Motor neuron (in vitro differentiated cells): ENCODE measurements at regions of chr10 and their contacts with region 1.

Region 1: DNA sequence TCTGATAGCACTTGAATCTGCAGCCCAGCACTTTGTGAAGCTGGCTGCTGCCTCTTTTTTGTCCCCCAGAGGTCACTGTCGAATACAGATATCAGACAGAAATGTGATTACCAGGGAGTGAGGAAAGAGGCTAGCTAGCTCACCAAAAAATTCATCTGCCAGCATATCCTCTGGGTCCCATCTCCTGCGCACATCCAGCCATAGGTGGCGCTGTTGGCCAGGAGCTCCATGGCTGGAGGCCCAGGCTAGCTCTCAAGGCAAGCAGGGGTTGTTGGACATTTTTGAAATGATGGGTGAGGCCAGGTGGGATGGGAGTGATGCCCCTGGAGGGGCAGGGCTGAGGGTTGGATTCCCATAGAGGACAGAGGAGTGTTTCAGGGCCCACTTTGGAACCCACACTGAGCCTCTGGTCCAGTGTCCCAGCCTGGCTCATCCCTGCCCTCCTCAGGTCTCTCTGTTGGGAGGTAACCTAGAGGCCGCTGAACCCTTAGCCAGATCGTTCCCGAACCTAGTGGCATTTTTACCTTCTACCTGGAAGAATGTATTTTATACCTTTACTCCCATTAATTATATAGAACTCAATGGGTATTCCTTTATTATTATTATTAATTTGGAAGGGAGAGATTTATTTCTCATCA is 14.8 kb downstream of the DPCD start:
- ATAC-seq: peak; percentile 99 to 100 (median 100)
- H3K4me3 ChIP-seq: no peak overlapping the region
- H3K27ac ChIP-seq: no peak overlapping the region
- H3K4me1 ChIP-seq: no peaks in the 10 kb centered on the region

Region 2: DNA sequence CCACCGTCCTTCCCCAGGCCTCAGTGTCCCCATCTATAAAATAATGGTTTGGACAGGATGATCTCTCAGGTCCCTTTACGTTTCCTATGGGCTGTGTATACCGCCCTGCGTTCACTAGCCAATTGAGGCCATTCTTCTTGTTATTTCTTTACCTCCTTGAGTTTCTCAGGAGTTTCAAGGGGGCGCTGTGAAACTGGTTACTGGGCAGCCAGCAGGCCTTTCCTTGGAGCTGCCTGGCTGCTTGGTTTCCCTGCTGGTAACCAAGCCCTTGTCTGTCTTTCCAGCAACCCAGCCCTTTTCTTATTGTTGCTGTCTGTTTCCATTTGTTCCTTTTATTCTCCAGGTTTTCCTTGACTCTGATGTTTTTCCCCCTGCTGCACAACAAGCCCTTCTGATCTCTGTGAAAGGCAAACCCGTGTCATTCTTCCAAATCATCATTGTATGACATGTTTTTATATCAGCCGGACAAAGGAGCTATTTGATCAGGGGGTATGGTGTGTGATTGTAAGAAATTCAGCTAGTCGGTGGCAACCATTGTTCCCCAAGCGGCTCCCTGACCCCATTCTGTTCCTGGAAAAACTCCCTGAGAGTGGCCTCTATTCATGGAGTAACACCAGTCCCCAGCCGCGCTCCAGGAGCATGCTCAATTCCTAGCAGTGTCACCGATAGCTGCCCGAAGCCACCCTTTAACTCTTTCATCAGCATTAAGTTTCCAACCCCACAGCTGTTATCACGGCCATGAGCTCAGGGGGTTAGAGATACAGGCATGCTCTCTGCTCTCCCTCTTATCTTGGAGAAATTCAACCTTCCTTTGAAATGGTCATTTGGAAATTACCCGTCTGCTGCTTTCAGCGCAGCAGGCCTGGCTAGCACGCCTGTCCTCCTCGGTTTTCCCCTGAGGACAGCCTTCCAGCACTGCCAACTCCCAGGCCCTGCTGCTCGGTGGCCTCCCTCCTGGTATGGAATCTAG is 146.5 kb after region 1 on chr10:
- in situ Hi-C with region 1: loop called in 2 of 9 experiments (anchors 25 kb)
- ATAC-seq: peak in 6 of 8 experiments; percentile 25 to 90 (median 84)
- H3K4me3 ChIP-seq: no peak overlapping the region
- H3K27ac ChIP-seq: peak overlapping the region in 1 of 2 donors; percentile 22
- H3K4me1 ChIP-seq: peaks cover 13 to 19% of the 10 kb centered on the region in 2 donors

Region 3: GRCh38 chr10:101782811-101783735 is 180.2 kb after region 1 on chr10 and contains the start of gene NPM3:
- in situ Hi-C with region 1: loop called in 4 of 9 experiments (anchors 10 to 25 kb)
- ATAC-seq: peak; percentile 52 to 90 (median 84)
- H3K4me3 ChIP-seq: peak within 1 kb of the TSS; percentile 51 to 90 (median 78)
- H3K27ac ChIP-seq: peak within 1 kb of the TSS; percentile 49 to 50
- H3K4me1 ChIP-seq: peaks cover 10 to 23% of the 10 kb centered on the region in 2 donors
- total RNA-seq, gene NPM3: 31.1 to 95.4 (median 41.6) TPM